Thyroid gland (tissue), 4 donors: ENCODE measurements at regions of chr6 and their contacts with region 1.

Region 1: DNA sequence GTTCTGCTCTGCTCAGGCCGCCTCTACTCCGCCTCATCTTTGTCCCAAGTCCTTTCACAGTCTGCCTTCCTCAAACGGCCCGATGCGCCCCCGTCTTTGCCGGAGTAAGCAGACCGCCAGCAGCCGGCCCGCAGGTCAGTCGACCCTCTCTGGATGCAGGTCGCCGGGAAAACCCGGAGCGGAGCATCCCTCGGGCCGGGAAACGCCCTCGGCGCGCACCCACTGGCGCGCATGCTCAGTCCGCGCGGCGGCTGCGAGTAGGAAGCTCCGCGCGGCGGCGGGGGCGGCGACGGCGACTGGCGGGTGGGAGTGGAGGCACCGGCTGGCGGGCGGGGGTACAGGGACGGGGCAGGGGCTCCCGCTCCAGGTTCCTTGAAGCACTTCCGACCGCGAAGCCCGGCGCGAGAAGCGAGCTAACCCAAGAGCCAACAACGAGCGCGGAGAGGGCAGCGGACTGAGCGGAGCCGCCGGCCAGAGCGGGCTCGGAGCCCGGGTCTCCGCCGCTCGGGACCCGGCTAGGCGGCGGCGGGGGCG is at the start of gene LRRC1:
- DNase-seq: peak; percentile 94 to 95
- H3K4me3 ChIP-seq: peak within 1 kb of the TSS; percentile 50 to 83 (median 76)
- H3K27ac ChIP-seq: peak within 1 kb of the TSS; percentile 56 to 93 (median 87)
- H3K4me1 ChIP-seq: peaks cover 10 to 20% of the 10 kb centered on the region in 2 donors
- H3K27me3 ChIP-seq: no peaks in the 10 kb centered on the region
- CTCF ChIP-seq: no peak
- POLR2A ChIP-seq: peak; percentile 40 to 91
- total RNA-seq, gene LRRC1: 41.7 to 52.4 (median 48.4) TPM

Region 2: GRCh38 chr6:53943395-53943794 is 148.6 kb after region 1 on chr6:
- intact Hi-C with region 1: loop called (anchors 10 kb)
- DNase-seq: peak; percentile 59 to 78
- H3K4me3 ChIP-seq: no peak overlapping the region
- H3K27ac ChIP-seq: peak overlapping the region; percentile 33 to 53 (median 51)
- H3K4me1 ChIP-seq: peaks cover 11 to 20% of the 10 kb centered on the region in 2 donors
- H3K27me3 ChIP-seq: no peaks in the 10 kb centered on the region
- CTCF ChIP-seq: no peak
- POLR2A ChIP-seq: no peak

Region 3: GRCh38 chr6:54327631-54328030 is 532.8 kb after region 1 on chr6:
- intact Hi-C with region 1: no loop called
- DNase-seq: no peak
- H3K4me3 ChIP-seq: no peak overlapping the region
- H3K27ac ChIP-seq: no peak overlapping the region
- H3K4me1 ChIP-seq: no peaks in the 10 kb centered on the region
- H3K27me3 ChIP-seq: no peaks in the 10 kb centered on the region
- CTCF ChIP-seq: no peak
- POLR2A ChIP-seq: no peak